A673 (cell line): ENCODE measurements at regions of chr7 and their contacts with region 1.

Region 1: DNA sequence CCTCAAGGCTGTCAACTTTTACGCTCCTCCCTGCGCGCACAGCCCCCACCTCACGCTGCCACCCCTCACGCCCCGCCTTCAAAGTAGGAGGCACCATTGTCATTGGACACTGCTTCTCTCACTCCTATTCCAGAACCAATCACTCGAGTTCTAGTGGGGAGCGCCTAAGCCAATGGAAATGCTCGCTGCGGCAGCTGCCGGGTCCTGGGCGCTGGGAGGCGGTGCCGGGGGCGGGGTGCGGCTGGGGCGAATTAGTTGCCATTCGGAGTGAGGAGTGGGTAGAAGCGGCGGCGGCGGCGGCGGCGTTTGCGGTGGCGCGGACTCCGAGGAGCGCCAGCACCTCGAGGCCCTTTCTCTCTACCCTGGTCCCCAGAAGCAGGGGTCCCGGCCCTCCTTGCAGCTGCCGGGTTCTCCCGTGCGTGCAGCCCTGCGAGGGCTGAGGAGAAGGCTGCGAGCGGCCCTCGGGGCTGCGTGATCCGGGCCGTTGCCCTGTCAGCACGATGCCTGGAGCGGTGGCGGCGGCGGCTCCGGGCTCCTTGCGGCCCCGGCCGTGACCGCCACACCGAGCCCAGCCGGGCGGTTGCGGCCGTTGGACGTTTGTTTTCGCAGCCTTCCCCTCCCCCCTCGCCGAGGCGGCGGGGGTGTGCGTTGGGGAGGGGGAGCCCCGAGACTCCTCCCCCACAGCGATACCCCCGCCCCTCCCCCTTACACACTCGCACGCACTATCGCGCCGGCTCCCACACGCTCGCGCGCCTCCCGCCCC is at the start of gene GLCCI1:
- DNase-seq: peak; percentile 98
- H3K4me3 ChIP-seq: peak within 1 kb of the TSS; percentile 86
- H3K27ac ChIP-seq: peak within 1 kb of the TSS; percentile 82
- H3K4me1 ChIP-seq: peaks cover 6% of the 10 kb centered on the region
- H3K27me3 ChIP-seq: no peaks in the 10 kb centered on the region
- CTCF ChIP-seq: no peak
- total RNA-seq, gene GLCCI1: 6.9 and 9.9 TPM in 2 replicates

Region 2: DNA sequence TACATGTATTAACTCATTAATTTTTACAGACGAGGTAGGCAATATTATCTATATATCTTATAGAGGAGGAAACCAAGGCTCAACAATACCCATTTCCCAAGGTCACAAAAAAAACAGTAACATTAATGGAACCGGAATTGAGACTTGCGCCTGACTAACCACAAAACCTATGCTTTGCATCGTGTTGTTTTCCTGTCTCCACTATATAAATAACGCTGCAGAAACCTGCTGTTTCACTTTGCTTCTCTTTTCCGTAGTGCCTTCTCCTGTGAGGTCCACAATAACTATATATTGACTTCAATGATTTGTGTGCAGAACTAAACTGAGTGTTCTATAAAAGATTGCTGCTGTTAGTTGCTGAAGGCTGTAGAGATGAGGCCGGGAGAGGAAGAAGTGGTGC is 152.6 kb before region 1 on chr7:
- CTCF ChIA-PET with region 1: no interaction called
- POLR2A ChIA-PET with region 1: no interaction called
- intact Hi-C with region 1: no loop called
- DNase-seq: no peak
- H3K4me3 ChIP-seq: no peak overlapping the region
- H3K27ac ChIP-seq: no peak overlapping the region
- H3K4me1 ChIP-seq: no peaks in the 10 kb centered on the region
- H3K27me3 ChIP-seq: no peaks in the 10 kb centered on the region
- CTCF ChIP-seq: no peak

Region 3: DNA sequence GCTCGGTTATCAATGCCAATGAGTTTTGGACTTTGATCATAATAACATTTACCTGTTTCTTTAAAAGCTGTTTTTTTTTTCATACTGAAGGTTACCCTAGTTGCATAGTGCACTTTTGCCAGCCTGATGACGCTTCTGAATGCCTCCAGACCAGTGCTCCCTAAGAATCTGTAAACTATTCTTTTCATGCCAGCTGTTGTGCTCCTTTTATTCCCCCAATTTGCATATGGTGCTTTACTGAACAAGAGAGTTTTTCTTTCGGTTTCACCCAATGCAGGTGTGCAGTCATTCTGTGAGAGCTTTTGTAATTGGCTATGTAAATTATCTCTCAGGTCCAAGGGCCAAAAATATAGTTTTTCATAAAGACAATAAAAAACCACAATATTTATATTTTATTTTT is 48.2 kb before region 1 on chr7:
- CTCF ChIA-PET with region 1: no interaction called
- POLR2A ChIA-PET with region 1: no interaction called
- intact Hi-C with region 1: no loop called
- DNase-seq: no peak
- H3K4me3 ChIP-seq: no peak overlapping the region
- H3K27ac ChIP-seq: no peak overlapping the region
- H3K4me1 ChIP-seq: no peaks in the 10 kb centered on the region
- H3K27me3 ChIP-seq: no peaks in the 10 kb centered on the region
- CTCF ChIP-seq: no peak

Region 4: DNA sequence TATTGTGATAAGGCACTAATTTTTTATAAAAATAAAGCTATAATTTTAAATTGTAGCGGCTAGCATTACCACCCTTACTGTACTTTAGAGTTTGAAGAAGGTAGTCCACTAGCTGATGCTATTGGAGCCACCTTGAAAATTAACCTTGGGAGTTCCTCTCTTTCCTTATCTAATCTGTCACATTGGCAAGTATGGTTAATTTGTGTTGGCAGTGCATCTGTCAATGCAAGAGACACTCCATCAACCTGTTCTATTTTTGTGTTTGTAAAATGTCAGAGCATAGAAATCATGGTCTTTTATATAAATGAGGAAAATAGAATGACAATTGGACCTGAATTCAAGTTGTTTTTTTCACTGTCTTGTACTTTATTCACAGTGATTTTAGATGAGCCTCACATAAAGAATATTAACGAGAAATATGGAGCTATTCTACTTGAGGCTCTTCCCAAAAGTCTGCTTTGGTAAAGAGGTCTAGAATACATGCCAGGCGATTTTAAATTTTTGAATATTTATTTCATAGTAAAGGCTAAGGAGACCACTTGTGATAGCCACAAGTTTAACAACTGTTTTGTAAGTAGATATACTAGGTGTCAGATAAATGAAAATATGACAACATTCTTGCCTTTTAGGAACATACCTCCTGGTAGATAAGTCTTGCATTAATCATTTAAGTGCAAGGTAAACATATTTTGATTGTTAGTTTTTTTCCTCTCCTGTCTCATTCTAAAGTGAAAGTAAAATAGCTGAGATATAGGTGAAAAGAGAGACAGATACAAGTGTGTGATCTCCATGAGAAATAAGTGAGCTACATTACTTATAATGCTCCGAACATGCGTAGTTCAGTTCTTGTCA is 20.6 kb after region 1 on chr7:
- CTCF ChIA-PET with region 1: no interaction called
- POLR2A ChIA-PET with region 1: no interaction called
- intact Hi-C with region 1: no loop called
- DNase-seq: no peak
- H3K4me3 ChIP-seq: no peak overlapping the region
- H3K27ac ChIP-seq: no peak overlapping the region
- H3K4me1 ChIP-seq: no peaks in the 10 kb centered on the region
- H3K27me3 ChIP-seq: no peaks in the 10 kb centered on the region
- CTCF ChIP-seq: no peak

Region 5: GRCh38 chr7:8190119-8190895 is 221.6 kb after region 1 on chr7:
- CTCF ChIA-PET with region 1: no interaction called
- POLR2A ChIA-PET with region 1: no interaction called
- intact Hi-C with region 1: loop called (anchors 5 kb)
- DNase-seq: peak; percentile 69
- H3K4me3 ChIP-seq: no peak overlapping the region
- H3K27ac ChIP-seq: no peak overlapping the region
- H3K4me1 ChIP-seq: peaks cover 6% of the 10 kb centered on the region
- H3K27me3 ChIP-seq: no peaks in the 10 kb centered on the region
- CTCF ChIP-seq: peak; percentile 83